ENCODE measurements at regions of chr5 and their contacts with region 1.

Region 1: DNA sequence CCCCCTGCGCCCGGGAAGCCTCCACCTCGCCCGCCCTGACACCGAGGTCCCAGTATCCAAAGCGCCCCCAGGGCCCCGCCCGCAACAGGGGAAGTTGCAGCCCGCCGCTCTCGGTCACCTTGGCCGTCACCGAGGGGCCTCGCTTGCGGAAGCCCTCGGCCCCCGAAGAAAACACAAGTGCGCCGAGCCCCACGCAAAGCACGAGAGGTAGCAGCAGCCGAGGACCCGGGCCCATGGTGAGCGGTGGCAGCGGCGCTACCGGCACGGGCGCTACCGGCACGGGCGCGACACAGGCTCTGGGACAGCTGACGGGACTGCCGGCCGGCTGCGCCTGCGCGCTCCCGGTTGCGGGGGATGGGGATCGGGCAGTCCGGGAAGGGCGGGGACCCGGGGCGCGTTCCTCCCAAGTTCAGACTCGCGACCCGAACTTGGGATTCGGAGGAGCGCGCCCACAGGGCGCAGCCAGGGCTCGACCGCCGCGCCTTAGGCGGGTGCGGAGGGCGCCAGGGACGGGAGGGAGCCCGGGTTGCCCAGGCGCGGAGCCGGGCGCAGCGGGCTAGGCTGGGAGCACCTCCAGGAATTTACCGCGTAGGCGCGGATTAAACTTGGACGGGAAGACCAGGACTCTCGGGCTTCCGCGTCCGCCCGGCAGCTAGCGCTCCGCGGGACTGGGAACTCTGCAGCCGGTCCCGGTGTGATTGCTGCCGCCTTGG is at the start of gene PPIC:
- DNase-seq: peak; percentile 95
- H3K4me3 Mint-ChIP-seq: peak within 1 kb of the TSS; percentile 89
- H3K27ac Mint-ChIP-seq: peak within 1 kb of the TSS; percentile 76
- H3K4me1 Mint-ChIP-seq: peaks cover 23% of the 10 kb centered on the region
- H3K27me3 Mint-ChIP-seq: no peaks in the 10 kb centered on the region
- CTCF ChIP-seq: no peak
- total RNA-seq, gene PPIC: 43.5 and 43.9 TPM in 2 replicates

Region 2: DNA sequence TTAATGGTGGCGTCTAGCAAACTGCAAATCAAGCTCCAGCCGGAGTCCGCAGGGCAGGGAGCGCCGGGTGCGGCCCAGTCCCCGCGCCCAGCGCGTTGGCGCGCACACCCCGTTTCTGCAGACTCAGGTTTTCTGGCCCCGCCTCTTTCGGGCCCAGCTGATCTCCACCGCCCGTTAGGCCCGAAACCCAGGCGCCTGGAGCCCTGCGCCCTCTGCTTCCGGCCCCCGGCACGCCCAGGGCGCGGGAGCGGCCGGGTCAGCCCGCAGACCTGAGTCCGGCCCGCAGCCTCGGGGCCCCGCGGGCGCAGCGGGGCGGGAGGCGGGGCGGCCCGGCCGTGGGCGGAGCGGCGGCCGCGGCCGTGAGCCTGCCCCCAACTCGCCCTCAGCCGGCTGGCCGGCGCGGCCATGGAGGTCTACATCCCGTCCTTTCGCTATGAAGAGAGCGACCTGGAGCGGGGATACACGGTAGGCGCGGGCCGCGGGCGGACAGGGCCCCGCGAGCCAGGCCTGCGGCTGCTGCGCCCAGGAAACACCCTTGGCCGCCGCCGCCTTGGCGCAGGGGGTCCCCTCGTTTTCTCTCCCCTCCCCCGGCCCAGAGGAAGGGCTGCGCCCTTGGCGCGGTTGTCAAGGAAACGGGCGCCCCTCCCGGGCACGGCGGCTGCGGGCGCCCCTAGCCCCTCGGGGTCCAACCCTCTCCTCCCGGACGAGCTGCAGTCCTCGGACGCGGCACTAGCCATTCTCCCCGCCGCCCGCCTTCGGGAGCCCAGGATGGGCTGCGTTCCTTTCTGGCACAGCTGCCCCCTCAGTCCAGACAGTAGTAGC is 191.1 kb before region 1 on chr5 and contains the start of gene SNX24:
- CTCF ChIA-PET with region 1: no interaction called
- intact Hi-C with region 1: loop called (anchors 5 kb)
- DNase-seq: peak; percentile 85
- H3K4me3 Mint-ChIP-seq: peak within 1 kb of the TSS; percentile 84
- H3K27ac Mint-ChIP-seq: peak within 1 kb of the TSS; percentile 88
- H3K4me1 Mint-ChIP-seq: peaks cover 41% of the 10 kb centered on the region
- H3K27me3 Mint-ChIP-seq: no peaks in the 10 kb centered on the region
- CTCF ChIP-seq: no peak
- total RNA-seq, gene SNX24: 16.1 and 23.5 TPM in 2 replicates

Region 3: DNA sequence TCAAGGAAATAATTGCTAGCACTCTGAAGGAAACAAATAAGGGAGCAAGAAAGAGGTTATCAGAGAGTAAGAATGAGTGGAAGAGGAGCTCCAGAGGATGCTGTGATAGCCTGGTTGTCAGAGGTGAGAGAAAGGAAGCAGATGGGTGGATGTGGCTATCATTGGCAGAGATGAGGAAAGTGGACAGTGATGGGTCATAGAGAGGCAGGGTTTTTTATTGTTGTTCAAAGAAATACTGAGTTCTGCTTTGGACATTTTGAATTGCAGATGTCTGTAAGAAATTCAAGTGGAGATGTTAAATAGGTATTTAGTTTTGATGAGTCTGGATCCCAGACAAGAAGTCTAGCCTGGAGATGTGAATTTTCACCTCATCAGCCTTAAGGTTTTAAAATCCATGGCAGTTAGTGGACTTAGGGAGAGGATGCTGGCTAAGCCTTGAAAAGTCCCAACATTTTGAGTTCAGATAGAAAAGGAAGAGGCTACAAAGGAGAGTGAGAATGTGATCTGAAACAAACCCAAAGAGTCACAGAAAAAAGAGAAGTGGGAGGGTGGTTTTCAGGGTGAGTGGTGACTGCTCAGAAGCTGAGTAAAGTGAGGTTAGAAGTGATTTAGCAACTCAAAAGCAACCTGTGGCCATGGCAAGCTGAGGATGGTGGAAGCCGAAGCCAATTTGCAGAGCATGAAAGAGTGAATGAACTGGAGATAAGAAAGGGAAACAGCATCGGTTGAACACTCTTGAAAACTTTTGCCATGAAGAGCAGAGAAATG is 50.4 kb before region 1 on chr5:
- CTCF ChIA-PET with region 1: no interaction called
- intact Hi-C with region 1: no loop called
- DNase-seq: no peak
- H3K4me3 Mint-ChIP-seq: no peak overlapping the region
- H3K27ac Mint-ChIP-seq: no peak overlapping the region
- H3K4me1 Mint-ChIP-seq: no peaks in the 10 kb centered on the region
- H3K27me3 Mint-ChIP-seq: no peaks in the 10 kb centered on the region
- CTCF ChIP-seq: no peak

Region 4: DNA sequence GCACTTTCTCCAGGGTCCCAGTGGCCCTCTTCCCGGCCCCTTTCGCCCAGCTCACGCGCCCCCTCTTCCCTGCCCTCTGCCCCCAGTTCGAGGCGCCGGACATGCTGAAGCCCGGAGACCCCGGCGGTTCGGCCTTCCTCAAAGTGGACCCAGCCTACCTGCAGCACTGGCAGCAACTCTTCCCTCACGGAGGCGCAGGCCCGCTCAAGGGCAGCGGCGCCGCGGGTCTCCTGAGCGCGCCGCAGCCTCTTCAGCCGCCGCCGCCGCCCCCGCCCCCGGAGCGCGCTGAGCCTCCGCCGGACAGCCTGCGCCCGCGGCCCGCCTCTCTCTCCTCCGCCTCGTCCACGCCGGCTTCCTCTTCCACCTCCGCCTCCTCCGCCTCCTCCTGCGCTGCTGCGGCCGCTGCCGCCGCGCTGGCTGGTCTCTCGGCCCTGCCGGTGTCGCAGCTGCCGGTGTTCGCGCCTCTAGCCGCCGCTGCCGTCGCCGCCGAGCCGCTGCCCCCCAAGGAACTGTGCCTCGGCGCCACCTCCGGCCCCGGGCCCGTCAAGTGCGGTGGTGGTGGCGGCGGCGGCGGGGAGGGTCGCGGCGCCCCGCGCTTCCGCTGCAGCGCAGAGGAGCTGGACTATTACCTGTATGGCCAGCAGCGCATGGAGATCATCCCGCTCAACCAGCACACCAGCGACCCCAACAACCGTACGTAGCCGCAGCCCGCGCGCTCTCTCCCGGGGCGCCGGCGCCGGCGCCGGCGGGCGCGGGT is 53.5 kb after region 1 on chr5:
- CTCF ChIA-PET with region 1: interaction called, 4 read pairs
- intact Hi-C with region 1: loop called (anchors 2 kb)
- DNase-seq: peak; percentile 54
- H3K4me3 Mint-ChIP-seq: peak overlapping the region; percentile 76
- H3K27ac Mint-ChIP-seq: no peak overlapping the region
- H3K4me1 Mint-ChIP-seq: peaks cover 34% of the 10 kb centered on the region
- H3K27me3 Mint-ChIP-seq: peaks cover 96% of the 10 kb centered on the region
- CTCF ChIP-seq: no peak

Region 5: DNA sequence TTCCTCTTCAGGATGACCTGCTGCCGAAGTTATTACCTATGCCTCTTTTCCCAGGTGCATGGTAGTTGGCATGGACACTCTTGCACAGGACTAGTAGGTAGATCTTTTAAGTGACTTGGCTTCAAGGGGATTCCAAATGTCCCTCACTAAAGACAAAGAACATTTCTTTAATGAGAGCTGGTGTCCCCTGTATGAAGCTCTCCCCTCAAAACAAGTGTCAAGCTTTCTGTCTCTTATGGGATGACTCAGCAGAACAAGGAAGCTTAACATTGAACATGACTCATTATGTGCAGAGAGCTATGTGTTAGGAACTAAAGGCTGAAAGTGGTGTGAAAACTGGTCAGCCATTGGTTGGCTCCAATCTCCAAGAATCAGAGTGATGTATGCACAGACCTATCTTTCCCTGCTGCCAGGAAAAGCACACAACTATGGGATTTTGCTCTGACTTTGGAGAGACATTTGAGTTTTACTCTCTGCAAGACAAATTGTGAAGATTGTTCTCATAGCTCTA is 173.0 kb after region 1 on chr5:
- CTCF ChIA-PET with region 1: no interaction called
- intact Hi-C with region 1: loop called (anchors 10 kb)
- DNase-seq: peak; percentile 53
- H3K4me3 Mint-ChIP-seq: peak overlapping the region; percentile 43
- H3K27ac Mint-ChIP-seq: peak overlapping the region; percentile 85
- H3K4me1 Mint-ChIP-seq: peaks cover 40% of the 10 kb centered on the region
- H3K27me3 Mint-ChIP-seq: no peaks in the 10 kb centered on the region
- CTCF ChIP-seq: no peak

Measured in Calu3 (cell line).